ENCODE measurements at regions of chr11 and their contacts with region 1.

Region 1: DNA sequence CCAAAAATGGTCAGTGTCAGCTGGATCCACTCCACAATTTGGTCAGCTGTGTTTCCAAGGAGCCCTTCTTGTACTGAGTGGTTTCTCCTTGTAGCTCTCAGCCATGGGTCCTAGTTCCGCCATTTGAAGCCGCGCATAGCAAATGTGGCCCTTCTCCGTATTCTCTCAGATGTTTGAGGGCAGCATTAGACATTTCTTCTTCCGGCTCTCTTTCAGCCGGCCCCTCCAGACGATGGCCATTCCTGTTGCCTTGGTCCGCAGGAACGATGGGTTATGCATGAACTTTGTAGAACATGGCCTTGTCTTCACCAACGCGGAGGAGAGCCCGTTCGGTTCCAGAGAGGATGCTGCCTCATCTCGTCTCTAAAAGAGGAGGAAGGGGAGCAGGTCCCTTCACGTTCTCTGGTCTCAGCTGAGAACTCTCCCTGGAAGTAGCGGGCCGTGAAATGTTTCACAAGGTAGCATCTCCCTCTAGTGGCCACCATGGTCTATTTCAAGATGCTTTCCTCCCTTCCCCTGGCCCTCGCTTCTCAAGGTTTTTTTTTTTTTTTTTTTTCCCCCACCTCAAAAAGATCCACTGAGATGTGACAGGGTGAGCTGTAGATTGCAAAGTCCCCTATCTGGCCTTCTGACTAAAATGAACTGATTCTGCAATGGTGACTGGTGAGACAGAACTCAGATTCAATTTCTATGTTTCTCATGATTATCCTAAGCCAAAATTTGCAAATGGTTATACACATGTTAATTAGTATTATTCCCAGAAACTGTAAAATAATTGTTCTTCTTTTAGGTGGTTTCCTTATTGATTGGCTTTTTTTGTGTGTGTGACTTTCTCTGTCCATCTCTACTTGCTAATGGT is 19.8 kb upstream of the PLET1 start:
- DNase-seq: no peak
- H3K4me3 ChIP-seq: peak overlapping the region; percentile 50 to 57 (median 55)
- H3K27ac ChIP-seq: peak overlapping the region in 3 of 4 donors; percentile 55 to 58 (median 57)
- H3K4me1 ChIP-seq: peaks cover 0 to 9% (median 7%) of the 10 kb centered on the region in 4 donors
- H3K27me3 ChIP-seq: no peaks in the 10 kb centered on the region
- CTCF ChIP-seq: peak; percentile 56 to 81 (median 68)
- EP300 ChIP-seq: no peak
- POLR2A ChIP-seq: no peak

Region 2: GRCh38 chr11:112113539-112114457 is 166.7 kb before region 1 on chr11:
- intact Hi-C with region 1: loop called (anchors 10 kb)
- DNase-seq: no peak
- H3K4me3 ChIP-seq: no peak overlapping the region
- H3K27ac ChIP-seq: no peak overlapping the region
- H3K4me1 ChIP-seq: peaks cover 0 to 7% (median 3%) of the 10 kb centered on the region in 4 donors
- H3K27me3 ChIP-seq: no peaks in the 10 kb centered on the region
- CTCF ChIP-seq: peak; percentile 63 to 74 (median 71)
- EP300 ChIP-seq: no peak
- POLR2A ChIP-seq: no peak

Region 3: DNA sequence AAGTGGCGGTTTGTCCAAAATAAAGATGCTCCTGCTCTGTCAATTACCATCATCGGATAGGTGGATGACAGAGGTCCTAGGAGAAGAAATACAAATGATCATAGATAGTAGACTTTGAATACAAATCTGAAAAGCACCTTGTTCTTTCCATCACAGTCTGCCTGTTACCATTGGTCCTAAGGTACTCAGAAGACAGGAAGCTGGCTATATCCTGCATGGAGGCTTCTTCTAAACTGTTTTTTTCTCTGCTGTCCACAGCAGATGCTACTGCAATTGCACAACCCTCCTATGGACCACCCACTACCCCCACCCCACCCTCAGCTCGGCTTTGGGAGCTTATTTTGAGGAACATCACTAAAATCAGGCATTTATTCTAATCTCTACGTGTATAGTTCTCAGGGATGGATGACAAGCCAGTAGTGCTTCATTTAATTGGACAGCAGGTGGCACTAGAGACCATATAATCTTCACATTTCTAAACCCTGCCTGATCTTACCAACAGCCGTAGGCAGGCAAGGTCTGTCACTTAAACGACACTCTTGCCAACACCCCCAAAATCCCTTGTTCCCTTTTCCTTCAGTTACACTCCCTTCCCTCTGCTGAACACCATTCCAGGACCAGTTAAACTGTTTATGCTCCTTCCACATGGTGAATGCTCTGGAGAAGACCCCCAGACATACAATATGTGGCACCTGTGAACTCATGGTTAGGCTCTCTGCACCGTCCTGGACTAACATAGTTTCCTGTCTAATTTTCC is 60.8 kb before region 1 on chr11:
- intact Hi-C with region 1: loop called (anchors 1 kb)
- DNase-seq: no peak
- H3K4me3 ChIP-seq: no peak overlapping the region
- H3K27ac ChIP-seq: no peak overlapping the region
- H3K4me1 ChIP-seq: peaks cover 0 to 28% (median 16%) of the 10 kb centered on the region in 4 donors
- H3K27me3 ChIP-seq: no peaks in the 10 kb centered on the region
- CTCF ChIP-seq: peak; percentile 77 to 90 (median 88)
- EP300 ChIP-seq: no peak
- POLR2A ChIP-seq: no peak

Region 4: GRCh38 chr11:112410325-112410724 is 129.8 kb after region 1 on chr11:
- intact Hi-C with region 1: no loop called
- DNase-seq: no peak
- H3K4me3 ChIP-seq: no peak overlapping the region
- H3K27ac ChIP-seq: no peak overlapping the region
- H3K4me1 ChIP-seq: no peaks in the 10 kb centered on the region
- H3K27me3 ChIP-seq: peaks cover 0 to 7% (median 0%) of the 10 kb centered on the region in 4 donors
- CTCF ChIP-seq: no peak
- EP300 ChIP-seq: no peak
- POLR2A ChIP-seq: no peak

Measured in esophagus muscularis mucosa (tissue), 4 donors.